Aorta (tissue), 5 donors: ENCODE measurements at regions of chr17 and their contacts with region 1.

Region 1: GRCh38 chr17:14755002-14755401 is 454.1 kb downstream of the HS3ST3B1 start:
- DNase-seq: no peak
- ATAC-seq: no peak
- H3K4me3 ChIP-seq: no peak overlapping the region
- H3K27ac ChIP-seq: no peak overlapping the region
- H3K4me1 ChIP-seq: no peaks in the 10 kb centered on the region
- H3K27me3 ChIP-seq: no peaks in the 10 kb centered on the region

Region 2: DNA sequence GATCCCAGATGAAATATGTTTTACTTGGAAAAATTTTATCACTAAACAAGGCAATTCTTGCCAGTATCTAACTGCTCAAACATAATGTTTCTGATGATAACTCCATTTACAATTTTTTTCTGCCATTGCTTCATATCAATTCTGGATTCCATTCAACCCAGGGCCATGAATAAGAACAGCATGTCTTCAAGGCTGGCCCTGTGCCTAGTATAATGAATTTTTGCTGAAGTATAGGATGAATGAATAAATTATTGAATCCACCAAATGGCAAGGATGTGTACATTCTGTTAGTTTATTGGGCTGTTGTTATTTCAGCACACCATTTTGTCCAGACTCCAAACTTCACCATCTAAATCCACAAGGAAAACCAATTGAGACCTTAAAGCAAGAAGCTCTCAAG is 39.4 kb before region 1 on chr17:
- intact Hi-C with region 1: no loop called
- DNase-seq: no peak
- ATAC-seq: no peak
- H3K4me3 ChIP-seq: no peak overlapping the region
- H3K27ac ChIP-seq: no peak overlapping the region
- H3K4me1 ChIP-seq: no peaks in the 10 kb centered on the region
- H3K27me3 ChIP-seq: no peaks in the 10 kb centered on the region

Region 3: GRCh38 chr17:14826358-14826757 is 71.4 kb after region 1 on chr17:
- intact Hi-C with region 1: loop called in 1 of 2 experiments (anchors 10 kb)
- DNase-seq: no peak
- ATAC-seq: no peak
- H3K4me3 ChIP-seq: no peak overlapping the region
- H3K27ac ChIP-seq: no peak overlapping the region
- H3K4me1 ChIP-seq: no peaks in the 10 kb centered on the region
- H3K27me3 ChIP-seq: no peaks in the 10 kb centered on the region

Region 4: GRCh38 chr17:14866266-14866665 is 111.3 kb after region 1 on chr17:
- intact Hi-C with region 1: no loop called
- DNase-seq: no peak
- ATAC-seq: no peak
- H3K4me3 ChIP-seq: no peak overlapping the region
- H3K27ac ChIP-seq: no peak overlapping the region
- H3K4me1 ChIP-seq: no peaks in the 10 kb centered on the region
- H3K27me3 ChIP-seq: no peaks in the 10 kb centered on the region